SK-N-SH (cell line): ENCODE measurements at regions of chr2 and their contacts with region 1.

Region 1: DNA sequence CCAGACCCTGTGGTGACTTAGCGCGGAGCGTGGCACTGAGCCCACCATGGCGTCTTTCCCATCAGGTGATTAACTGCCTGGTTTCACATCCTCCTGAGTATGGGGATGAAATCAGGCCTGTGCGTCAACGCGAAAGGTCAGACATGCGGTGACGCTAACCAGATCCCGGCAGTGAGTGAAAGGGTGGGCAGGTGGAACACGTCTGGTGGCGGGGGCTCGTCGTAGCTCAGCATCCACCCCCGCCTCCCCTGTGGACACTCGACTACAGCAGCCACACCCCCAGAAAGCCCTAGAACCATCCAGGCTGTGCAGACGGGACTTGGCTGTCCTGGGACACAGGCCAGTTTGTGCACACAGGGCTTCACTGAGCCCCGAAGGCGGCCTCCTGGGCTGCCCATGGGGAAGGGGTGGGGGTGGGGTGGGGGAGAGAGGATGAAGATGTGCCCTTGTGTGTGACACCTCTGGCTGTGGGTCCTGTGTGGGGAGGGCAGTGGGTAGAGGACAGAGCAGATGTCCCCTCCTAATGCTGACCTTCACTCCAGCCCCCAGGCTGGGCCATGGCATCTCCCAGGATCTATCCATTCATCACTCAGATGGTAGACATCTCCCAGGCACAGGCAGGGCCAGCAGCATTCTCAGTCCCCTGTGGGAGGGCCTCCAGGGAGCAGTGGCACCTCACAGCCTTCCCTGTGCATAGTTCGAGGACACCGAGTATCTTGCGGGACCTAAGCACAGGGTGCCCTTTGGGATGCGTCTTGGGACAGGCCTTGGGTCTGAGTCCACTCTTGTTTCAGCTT is 27.5 kb downstream of the RAMP1 start:
- DNase-seq: peak; percentile 86
- H3K4me3 ChIP-seq: no peak overlapping the region
- H3K27ac ChIP-seq: peak overlapping the region in 1 of 2 experiments; percentile 99; a peak in 2 of 4 replicates
- H3K4me1 ChIP-seq: peaks cover 0 to 58% of the 10 kb centered on the region in 2 experiments; a peak in 1 of 4 replicates
- H3K27me3 ChIP-seq: no peaks in the 10 kb centered on the region
- CTCF ChIP-seq: no peak
- EP300 ChIP-seq: peak; percentile 9 to 98; a peak in 3 of 4 replicates
- RAD21 ChIP-seq: peak; percentile 16

Region 2: GRCh38 chr2:237874585-237875161 is 12.2 kb before region 1 on chr2:
- CTCF ChIA-PET with region 1: interaction called, 11 read pairs
- POLR2A ChIA-PET with region 1: interaction called, 18 read pairs
- DNase-seq: no peak
- H3K4me3 ChIP-seq: no peak overlapping the region
- H3K27ac ChIP-seq: peak overlapping the region; percentile 50 to 64; a peak in 3 of 4 replicates
- H3K4me1 ChIP-seq: peaks cover 13 to 93% of the 10 kb centered on the region in 2 experiments; a peak in 3 of 4 replicates
- H3K27me3 ChIP-seq: no peaks in the 10 kb centered on the region
- CTCF ChIP-seq: no peak
- EP300 ChIP-seq: peak in 1 of 2 experiments; percentile 39; a peak in 1 of 4 replicates
- RAD21 ChIP-seq: no peak

Region 3: GRCh38 chr2:238389926-238390597 is 503.2 kb after region 1 on chr2:
- CTCF ChIA-PET with region 1: no interaction called
- POLR2A ChIA-PET with region 1: no interaction called
- DNase-seq: no peak
- H3K4me3 ChIP-seq: no peak overlapping the region
- H3K27ac ChIP-seq: peak overlapping the region in 1 of 2 experiments; percentile 75; a peak in 1 of 4 replicates
- H3K4me1 ChIP-seq: peaks cover 3 to 4% of the 10 kb centered on the region in 2 experiments; a peak in 2 of 4 replicates
- H3K27me3 ChIP-seq: no peaks in the 10 kb centered on the region
- CTCF ChIP-seq: no peak
- EP300 ChIP-seq: no peak
- RAD21 ChIP-seq: no peak